ENCODE measurements at regions of chr16 and their contacts with region 1.

Region 1: DNA sequence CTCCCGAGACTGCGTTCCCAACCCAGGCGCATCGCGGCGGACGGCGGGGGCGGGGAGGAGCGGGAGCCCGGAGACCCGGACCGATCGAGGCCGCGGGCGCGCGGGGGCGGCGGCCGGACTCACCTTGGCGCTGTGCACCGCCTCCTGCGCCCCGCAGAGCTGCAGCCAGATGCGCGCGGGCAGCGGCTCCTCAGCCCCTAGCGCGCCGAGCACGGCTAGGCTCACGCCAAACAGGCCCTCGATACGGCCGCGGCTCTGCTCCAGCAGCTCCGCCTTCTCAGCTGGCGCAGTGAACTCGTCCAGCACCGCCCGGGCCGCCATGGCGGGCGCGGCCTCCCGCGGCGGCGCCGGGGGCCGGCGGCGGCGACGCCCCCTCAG is 339 bp downstream of the N4BP1 start:
- DNase-seq: no peak
- H3K4me3 ChIP-seq: peak overlapping the region; percentile 55 to 82
- H3K4me3 Mint-ChIP-seq: peak overlapping the region in 1 of 8 donors; percentile 90
- H3K27ac ChIP-seq: peak overlapping the region; percentile 87
- H3K27ac Mint-ChIP-seq: peak overlapping the region; percentile 92 to 97 (median 95)
- H3K4me1 ChIP-seq: peaks cover 81% of the 10 kb centered on the region
- H3K4me1 Mint-ChIP-seq: peaks cover 35 to 52% (median 39%) of the 10 kb centered on the region in 4 donors
- H3K27me3 ChIP-seq: no peaks in the 10 kb centered on the region
- H3K27me3 Mint-ChIP-seq: no peaks in the 10 kb centered on the region

Region 2: DNA sequence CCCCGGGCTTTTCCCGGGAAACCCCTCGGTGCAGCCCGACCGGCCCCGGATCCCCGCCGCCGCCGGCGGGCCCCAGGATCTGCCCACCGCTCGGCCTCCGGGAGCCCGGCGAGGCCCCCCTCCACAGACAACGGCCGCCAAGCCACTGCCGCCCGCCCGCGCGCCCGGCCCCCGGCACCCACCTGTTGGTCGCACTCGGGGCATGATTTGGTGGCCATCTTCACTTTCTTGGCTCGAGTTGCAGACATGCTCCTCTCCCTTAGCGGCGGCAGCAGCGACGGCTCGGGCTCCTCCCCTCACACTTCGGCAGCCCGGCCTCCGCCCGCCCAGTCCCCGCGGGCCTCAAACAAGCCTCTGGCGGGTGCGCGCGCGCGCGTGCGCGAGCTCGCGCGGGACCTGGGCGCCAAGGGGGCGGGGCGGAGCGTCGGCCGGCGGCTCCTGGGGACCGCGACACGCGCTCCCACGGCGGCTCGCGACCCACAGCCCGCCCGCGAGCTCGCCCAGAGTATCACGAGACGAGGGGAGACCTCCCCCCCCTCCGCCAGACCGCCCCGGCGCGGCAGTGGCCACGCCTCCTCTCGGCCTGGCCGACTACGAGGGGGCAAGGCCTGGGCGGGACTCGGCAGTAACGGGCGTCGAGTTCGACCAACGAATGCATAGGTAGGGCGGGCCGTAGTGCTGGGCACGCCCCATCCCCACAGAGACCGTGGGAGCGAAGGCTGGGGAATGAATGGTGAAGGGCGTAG is 1778.6 kb before region 1 on chr16 and contains the start of gene C16orf87:
- CTCF ChIA-PET with region 1: no interaction called
- POLR2A ChIA-PET with region 1: interaction called, 3 read pairs
- intact Hi-C with region 1: loop called (anchors 2 kb)
- DNase-seq: peak; percentile 92 to 95 (median 93)
- H3K4me3 ChIP-seq: peak within 1 kb of the TSS; percentile 74 to 84
- H3K4me3 Mint-ChIP-seq: peak within 1 kb of the TSS; percentile 92 to 100 (median 94)
- H3K27ac ChIP-seq: peak within 1 kb of the TSS; percentile 71
- H3K27ac Mint-ChIP-seq: peak within 1 kb of the TSS; percentile 89 to 99 (median 97)
- H3K4me1 ChIP-seq: peaks cover 41% of the 10 kb centered on the region
- H3K4me1 Mint-ChIP-seq: peaks cover 18 to 37% (median 25%) of the 10 kb centered on the region in 4 donors
- H3K27me3 ChIP-seq: no peaks in the 10 kb centered on the region
- H3K27me3 Mint-ChIP-seq: no peaks in the 10 kb centered on the region
- total RNA-seq, gene C16orf87: 5.8 to 6.2 TPM

Region 3: GRCh38 chr16:47460711-47461597 is 1148.7 kb before region 1 on chr16 and contains the starts of genes ITFG1 and PHKB:
- CTCF ChIA-PET with region 1: no interaction called
- POLR2A ChIA-PET with region 1: interaction called, 3 read pairs
- intact Hi-C with region 1: loop called (anchors 10 kb)
- DNase-seq: peak; percentile 95 to 98 (median 97)
- H3K4me3 ChIP-seq: peak within 1 kb of the TSS; percentile 74 to 92
- H3K4me3 Mint-ChIP-seq: peak within 1 kb of the TSS; percentile 92 to 99 (median 96)
- H3K27ac ChIP-seq: peak within 1 kb of the TSS; percentile 82
- H3K27ac Mint-ChIP-seq: peak within 1 kb of the TSS; percentile 87 to 99 (median 97)
- H3K4me1 ChIP-seq: peaks cover 56% of the 10 kb centered on the region
- H3K4me1 Mint-ChIP-seq: peaks cover 35 to 72% (median 60%) of the 10 kb centered on the region in 4 donors
- H3K27me3 ChIP-seq: no peaks in the 10 kb centered on the region
- H3K27me3 Mint-ChIP-seq: no peaks in the 10 kb centered on the region
- total RNA-seq, gene ITFG1: 26.1 to 27.7 TPM
- total RNA-seq, gene PHKB: 50.8 to 56.4 TPM

Region 4: GRCh38 chr16:48365581-48366164 is 244.0 kb before region 1 on chr16:
- CTCF ChIA-PET with region 1: interaction called, 5 read pairs
- POLR2A ChIA-PET with region 1: interaction called, 14 read pairs
- intact Hi-C with region 1: loop called (anchors 2 kb)
- DNase-seq: peak; percentile 73 to 78 (median 75)
- H3K4me3 ChIP-seq: peak overlapping the region; percentile 82 to 86
- H3K4me3 Mint-ChIP-seq: peak overlapping the region; percentile 85 to 97 (median 94)
- H3K27ac ChIP-seq: peak overlapping the region; percentile 76
- H3K27ac Mint-ChIP-seq: peak overlapping the region; percentile 88 to 99 (median 98)
- H3K4me1 ChIP-seq: peaks cover 22% of the 10 kb centered on the region
- H3K4me1 Mint-ChIP-seq: peaks cover 23 to 34% (median 31%) of the 10 kb centered on the region in 4 donors
- H3K27me3 ChIP-seq: no peaks in the 10 kb centered on the region
- H3K27me3 Mint-ChIP-seq: no peaks in the 10 kb centered on the region

Region 5: GRCh38 chr16:48556913-48557351 is 52.7 kb before region 1 on chr16:
- CTCF ChIA-PET with region 1: interaction called, 3 read pairs
- POLR2A ChIA-PET with region 1: interaction called, 11 read pairs
- intact Hi-C with region 1: loop called (anchors 2 kb)
- DNase-seq: peak in 1 of 5 donors; percentile 56
- H3K4me3 ChIP-seq: no peak overlapping the region
- H3K4me3 Mint-ChIP-seq: peak overlapping the region in 3 of 8 donors; percentile 22 to 47 (median 33)
- H3K27ac ChIP-seq: no peak overlapping the region
- H3K27ac Mint-ChIP-seq: peak overlapping the region in 6 of 7 donors; percentile 9 to 68 (median 42)
- H3K4me1 ChIP-seq: peaks cover 63% of the 10 kb centered on the region
- H3K4me1 Mint-ChIP-seq: peaks cover 51 to 83% (median 72%) of the 10 kb centered on the region in 4 donors
- H3K27me3 ChIP-seq: no peaks in the 10 kb centered on the region
- H3K27me3 Mint-ChIP-seq: no peaks in the 10 kb centered on the region

Region 6: DNA sequence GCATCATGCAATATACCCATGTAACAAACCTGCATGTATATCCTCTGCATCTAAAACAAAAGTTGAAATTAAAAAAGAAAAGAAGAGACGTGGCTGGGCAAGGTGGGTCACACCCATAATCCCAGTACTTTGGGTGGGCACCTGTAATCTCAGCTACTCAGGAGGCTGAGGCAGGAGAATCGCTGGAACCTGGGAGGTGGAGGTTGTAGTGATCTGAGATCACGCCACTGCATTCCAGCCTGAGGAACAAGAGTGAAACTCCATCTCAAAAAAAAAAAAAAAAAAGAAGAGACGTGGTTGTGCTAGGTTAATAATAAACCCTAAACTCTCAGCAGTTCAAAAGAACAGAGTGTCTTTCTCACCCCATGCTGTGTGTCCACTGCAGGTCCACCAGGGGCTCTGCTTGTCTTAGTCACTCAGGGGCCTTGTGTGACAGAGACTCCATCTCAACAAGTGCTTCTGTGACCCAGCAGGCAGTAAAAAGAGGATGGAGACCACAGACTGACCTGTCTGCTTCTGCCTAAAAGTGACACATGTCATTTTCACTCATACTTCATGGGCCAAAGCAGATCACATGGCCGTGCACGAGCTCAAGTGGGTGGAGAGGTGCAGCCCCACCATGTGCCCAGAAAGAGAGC is 22.6 kb after region 1 on chr16:
- CTCF ChIA-PET with region 1: interaction called, 13 read pairs
- POLR2A ChIA-PET with region 1: interaction called, 5 read pairs
- intact Hi-C with region 1: no loop called
- DNase-seq: no peak
- H3K4me3 ChIP-seq: no peak overlapping the region
- H3K4me3 Mint-ChIP-seq: no peak overlapping the region
- H3K27ac ChIP-seq: no peak overlapping the region
- H3K27ac Mint-ChIP-seq: peak overlapping the region in 1 of 7 donors; percentile 75
- H3K4me1 ChIP-seq: peaks cover 4% of the 10 kb centered on the region
- H3K4me1 Mint-ChIP-seq: peaks cover 4 to 11% (median 5%) of the 10 kb centered on the region in 4 donors
- H3K27me3 ChIP-seq: no peaks in the 10 kb centered on the region
- H3K27me3 Mint-ChIP-seq: peaks cover 3 to 7% of the 10 kb centered on the region in 2 donors